ENCODE measurements at regions of chr9 and their contacts with region 1.

Region 1: GRCh38 chr9:33076358-33077004 is at the start of gene SMU1:
- DNase-seq: peak; percentile 99
- H3K4me3 ChIP-seq: peak within 1 kb of the TSS; percentile 88
- H3K27ac ChIP-seq: peak within 1 kb of the TSS; percentile 92
- H3K4me1 ChIP-seq: peaks cover 15% of the 10 kb centered on the region; the same call in 1 of the 2 replicates
- H3K27me3 ChIP-seq: no peaks in the 10 kb centered on the region
- total RNA-seq, gene SMU1: 23.1 and 26.3 TPM in 2 replicates

Region 2: DNA sequence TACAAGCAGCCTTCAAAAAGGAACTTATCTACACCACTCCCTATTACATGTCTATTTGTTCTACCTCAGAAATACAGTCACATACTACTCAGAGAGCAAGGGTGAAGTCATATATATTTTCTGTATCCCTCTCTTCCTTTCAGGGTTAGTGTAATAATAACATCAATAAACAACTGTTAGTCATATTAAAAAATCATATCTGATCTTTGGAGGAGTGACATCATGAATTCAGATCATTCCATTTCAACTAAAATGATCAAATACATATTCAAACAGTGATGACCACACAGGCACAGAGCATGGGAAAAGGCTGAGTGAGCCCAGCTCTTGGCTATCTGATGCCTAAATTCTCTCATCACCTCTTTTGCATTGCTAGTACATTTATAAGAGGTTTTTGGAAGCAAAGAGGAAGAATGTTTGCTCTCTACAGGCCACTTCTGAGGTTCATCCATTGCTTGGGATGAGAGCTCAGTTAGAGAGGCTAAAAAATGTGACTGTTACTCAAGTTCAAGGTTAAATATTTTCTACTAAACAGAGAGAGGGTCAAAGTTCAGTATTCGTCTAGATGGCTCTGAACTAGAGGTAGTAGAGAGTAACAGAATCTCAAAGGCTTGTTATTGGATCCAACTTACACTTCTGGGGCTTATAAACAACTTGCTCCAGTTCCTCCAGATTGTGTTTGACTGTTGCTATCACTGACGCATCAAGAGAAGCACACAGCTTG is 589.5 kb before region 1 on chr9:
- in situ Hi-C with region 1: no loop called
- DNase-seq: peak; percentile 37
- H3K4me3 ChIP-seq: no peak overlapping the region
- H3K27ac ChIP-seq: no peak overlapping the region
- H3K4me1 ChIP-seq: peaks cover 3% of the 10 kb centered on the region; the same call in 1 of the 2 replicates
- H3K27me3 ChIP-seq: no peaks in the 10 kb centered on the region

Region 3: GRCh38 chr9:33225319-33226149 is 149.1 kb after region 1 on chr9:
- in situ Hi-C with region 1: loop called (anchors 5 kb)
- DNase-seq: peak; percentile 86
- H3K4me3 ChIP-seq: no peak overlapping the region
- H3K27ac ChIP-seq: no peak overlapping the region
- H3K4me1 ChIP-seq: peaks cover 5% of the 10 kb centered on the region
- H3K27me3 ChIP-seq: no peaks in the 10 kb centered on the region

Region 4: GRCh38 chr9:33473643-33474352 is 397.3 kb after region 1 on chr9 and contains the start of gene NOL6:
- in situ Hi-C with region 1: loop called (anchors 25 kb)
- DNase-seq: peak; percentile 100
- H3K4me3 ChIP-seq: peak within 1 kb of the TSS; percentile 94
- H3K27ac ChIP-seq: peak within 1 kb of the TSS; percentile 74
- H3K4me1 ChIP-seq: peaks cover 18% of the 10 kb centered on the region; the same call in 1 of the 2 replicates
- H3K27me3 ChIP-seq: no peaks in the 10 kb centered on the region
- total RNA-seq, gene NOL6: 27.9 and 31.2 TPM in 2 replicates

Measured in GM23248 (cell line).